ENCODE measurements at regions of chr22 and their contacts with region 1.

Region 1: GRCh38 chr22:40346178-40347118 is at the start of gene ADSL:
- DNase-seq: peak; percentile 41
- ATAC-seq: peak; percentile 95
- H3K4me3 ChIP-seq: peak within 1 kb of the TSS; percentile 81
- H3K27ac ChIP-seq: peak within 1 kb of the TSS; percentile 92
- H3K4me1 ChIP-seq: 0 out of 2 replicates have a peak, but pooled peaks cover 3% of the 10 kb centered on the region
- H3K27me3 ChIP-seq: no peaks in the 10 kb centered on the region
- CTCF ChIP-seq: no peak
- EP300 ChIP-seq: no peak
- POLR2A ChIP-seq: peak; percentile 99
- RAD21 ChIP-seq: no peak
- polyA plus RNA-seq, gene ADSL: 230 to 313 TPM

Region 2: DNA sequence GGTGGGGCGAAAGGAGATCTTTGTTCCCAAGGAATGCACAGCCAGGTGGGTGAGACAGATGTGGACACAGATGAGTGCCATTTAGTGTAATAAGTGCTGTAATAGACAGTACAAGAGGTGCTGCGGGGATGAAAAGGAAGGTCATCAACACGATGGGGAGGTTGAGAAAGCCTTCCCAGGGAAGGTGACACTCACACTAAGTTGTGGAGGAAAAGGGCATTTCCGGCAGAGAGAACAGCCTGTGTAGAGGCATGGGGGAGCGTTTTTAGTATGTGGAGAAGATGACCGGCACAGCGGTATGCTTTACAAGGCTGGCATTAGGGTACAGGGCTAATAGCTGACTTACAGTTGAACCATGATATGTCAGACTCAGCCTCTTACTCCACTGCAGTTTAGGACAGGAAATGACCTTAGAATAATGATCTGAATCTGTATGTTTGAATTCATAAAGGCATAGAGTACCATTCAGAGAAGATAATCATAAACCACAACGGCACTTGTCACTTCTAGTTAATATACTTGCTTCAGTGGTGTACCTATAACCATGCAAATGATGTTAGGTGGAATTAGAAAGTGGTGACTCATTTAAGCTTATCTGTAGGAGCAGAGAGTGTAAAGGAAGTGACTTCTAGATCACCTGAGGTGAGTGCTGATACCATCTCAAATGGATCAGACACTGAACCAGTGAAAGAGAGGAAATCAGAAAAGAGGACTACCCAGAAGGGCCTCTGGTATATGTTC is 291.1 kb before region 1 on chr22:
- CTCF ChIA-PET with region 1: interaction called, 18 read pairs
- POLR2A ChIA-PET with region 1: no interaction called
- RAD21 ChIA-PET with region 1: interaction called, 3 read pairs
- SMC1A ChIA-PET with region 1: interaction called, 3 read pairs
- in situ Hi-C with region 1: no loop called
- intact Hi-C with region 1: no loop called
- DNase-seq: peak; percentile 40
- ATAC-seq: peak; percentile 92
- H3K4me3 ChIP-seq: 0 out of 2 replicates have a peak overlapping the region, but pooled peaks have one; percentile 10
- H3K27ac ChIP-seq: no peak overlapping the region; the same call in 1 of the 2 replicates
- H3K4me1 ChIP-seq: peaks cover 30% of the 10 kb centered on the region
- H3K27me3 ChIP-seq: no peaks in the 10 kb centered on the region
- CTCF ChIP-seq: no peak
- EP300 ChIP-seq: no peak
- POLR2A ChIP-seq: no peak
- RAD21 ChIP-seq: no peak

Region 3: GRCh38 chr22:40270748-40271373 is 75.6 kb before region 1 on chr22:
- CTCF ChIA-PET with region 1: interaction called, 6 read pairs
- POLR2A ChIA-PET with region 1: interaction called, 3 read pairs
- RAD21 ChIA-PET with region 1: interaction called, 16 read pairs
- SMC1A ChIA-PET with region 1: interaction called, 19 read pairs
- in situ Hi-C with region 1: no loop called
- intact Hi-C with region 1: no loop called
- DNase-seq: no peak
- ATAC-seq: no peak
- H3K4me3 ChIP-seq: no peak overlapping the region
- H3K27ac ChIP-seq: no peak overlapping the region
- H3K4me1 ChIP-seq: no peaks in the 10 kb centered on the region
- H3K27me3 ChIP-seq: no peaks in the 10 kb centered on the region
- CTCF ChIP-seq: no peak
- EP300 ChIP-seq: no peak
- POLR2A ChIP-seq: no peak
- RAD21 ChIP-seq: no peak

Region 4: GRCh38 chr22:40334899-40335298 is 11.5 kb before region 1 on chr22:
- CTCF ChIA-PET with region 1: interaction called, 40 read pairs
- POLR2A ChIA-PET with region 1: interaction called, 6 read pairs
- RAD21 ChIA-PET with region 1: interaction called, 7 read pairs
- SMC1A ChIA-PET with region 1: interaction called, 40 read pairs
- in situ Hi-C with region 1: no loop called
- intact Hi-C with region 1: no loop called
- DNase-seq: no peak
- ATAC-seq: no peak
- H3K4me3 ChIP-seq: no peak overlapping the region
- H3K27ac ChIP-seq: no peak overlapping the region
- H3K4me1 ChIP-seq: peaks cover 36% of the 10 kb centered on the region
- H3K27me3 ChIP-seq: no peaks in the 10 kb centered on the region
- CTCF ChIP-seq: no peak
- EP300 ChIP-seq: no peak
- POLR2A ChIP-seq: no peak
- RAD21 ChIP-seq: no peak

Region 5: GRCh38 chr22:40391417-40391816 is 45.0 kb after region 1 on chr22:
- CTCF ChIA-PET with region 1: no interaction called
- POLR2A ChIA-PET with region 1: no interaction called
- RAD21 ChIA-PET with region 1: no interaction called
- SMC1A ChIA-PET with region 1: no interaction called
- in situ Hi-C with region 1: no loop called
- intact Hi-C with region 1: no loop called
- DNase-seq: no peak
- ATAC-seq: no peak
- H3K4me3 ChIP-seq: no peak overlapping the region
- H3K27ac ChIP-seq: no peak overlapping the region
- H3K4me1 ChIP-seq: peaks cover 11% of the 10 kb centered on the region
- H3K27me3 ChIP-seq: no peaks in the 10 kb centered on the region
- CTCF ChIP-seq: no peak
- EP300 ChIP-seq: no peak
- POLR2A ChIP-seq: no peak
- RAD21 ChIP-seq: no peak

Region 6: DNA sequence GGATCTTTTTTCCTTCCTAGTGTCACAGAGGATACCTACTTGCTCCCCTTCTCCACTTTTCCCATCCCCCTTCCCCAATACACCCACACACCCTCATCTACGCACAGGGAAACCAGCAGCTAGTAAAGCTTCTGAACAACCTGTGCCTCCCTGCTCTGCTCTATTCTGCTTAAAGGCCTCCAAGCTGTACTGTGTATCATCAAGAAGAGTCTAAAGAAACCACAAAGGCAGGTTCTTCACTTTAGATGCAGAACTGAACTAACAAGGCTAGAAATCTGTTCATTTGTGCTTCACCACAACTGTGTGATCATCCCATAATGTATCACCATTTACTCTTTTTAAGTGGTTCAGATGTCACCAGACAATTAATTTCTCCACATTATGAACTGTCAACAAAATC is 156.5 kb after region 1 on chr22:
- CTCF ChIA-PET with region 1: no interaction called
- POLR2A ChIA-PET with region 1: no interaction called
- RAD21 ChIA-PET with region 1: no interaction called
- SMC1A ChIA-PET with region 1: no interaction called
- in situ Hi-C with region 1: no loop called
- intact Hi-C with region 1: no loop called
- DNase-seq: no peak
- ATAC-seq: 0 out of 3 replicates have a peak, but pooled peaks have one; percentile 9
- H3K4me3 ChIP-seq: no peak overlapping the region
- H3K27ac ChIP-seq: no peak overlapping the region
- H3K4me1 ChIP-seq: peaks cover 35% of the 10 kb centered on the region
- H3K27me3 ChIP-seq: no peaks in the 10 kb centered on the region
- CTCF ChIP-seq: no peak
- EP300 ChIP-seq: no peak
- POLR2A ChIP-seq: no peak
- RAD21 ChIP-seq: no peak

Region 7: DNA sequence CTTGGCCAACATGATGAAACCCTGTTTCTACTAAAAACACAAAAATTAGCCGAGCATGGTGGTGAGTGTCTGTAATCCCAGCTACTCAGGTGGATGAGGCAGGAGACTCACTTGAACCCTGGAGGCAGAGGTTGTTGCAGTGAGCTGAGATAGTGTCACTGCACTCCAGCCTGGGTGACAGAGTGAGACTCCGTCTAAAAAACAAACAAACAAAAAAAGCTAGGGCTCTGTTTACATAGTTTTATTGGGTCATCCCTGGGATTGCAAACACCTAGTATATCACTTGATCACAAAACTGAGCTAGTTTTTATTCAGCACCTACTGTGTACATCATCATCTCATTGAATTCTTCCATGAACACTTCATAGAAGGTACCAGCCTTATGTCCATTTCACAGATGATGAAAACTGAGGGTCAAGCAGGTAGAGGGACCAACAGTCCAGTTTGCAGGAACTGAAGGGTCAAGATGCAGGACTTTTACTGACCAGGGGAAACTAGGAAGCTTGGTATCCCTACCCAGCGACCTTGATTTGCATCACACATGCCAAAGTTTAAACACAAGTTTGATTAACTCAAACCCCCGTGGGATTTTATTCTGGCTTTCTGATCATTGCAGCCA is 299.2 kb after region 1 on chr22:
- CTCF ChIA-PET with region 1: interaction called, 29 read pairs
- POLR2A ChIA-PET with region 1: no interaction called
- RAD21 ChIA-PET with region 1: interaction called, 4 read pairs
- SMC1A ChIA-PET with region 1: interaction called, 19 read pairs
- in situ Hi-C with region 1: no loop called
- intact Hi-C with region 1: no loop called
- DNase-seq: no peak
- ATAC-seq: no peak
- H3K4me3 ChIP-seq: no peak overlapping the region
- H3K27ac ChIP-seq: no peak overlapping the region
- H3K4me1 ChIP-seq: peaks cover 18% of the 10 kb centered on the region
- H3K27me3 ChIP-seq: no peaks in the 10 kb centered on the region
- CTCF ChIP-seq: no peak
- EP300 ChIP-seq: no peak
- POLR2A ChIP-seq: no peak
- RAD21 ChIP-seq: no peak

Region 8: DNA sequence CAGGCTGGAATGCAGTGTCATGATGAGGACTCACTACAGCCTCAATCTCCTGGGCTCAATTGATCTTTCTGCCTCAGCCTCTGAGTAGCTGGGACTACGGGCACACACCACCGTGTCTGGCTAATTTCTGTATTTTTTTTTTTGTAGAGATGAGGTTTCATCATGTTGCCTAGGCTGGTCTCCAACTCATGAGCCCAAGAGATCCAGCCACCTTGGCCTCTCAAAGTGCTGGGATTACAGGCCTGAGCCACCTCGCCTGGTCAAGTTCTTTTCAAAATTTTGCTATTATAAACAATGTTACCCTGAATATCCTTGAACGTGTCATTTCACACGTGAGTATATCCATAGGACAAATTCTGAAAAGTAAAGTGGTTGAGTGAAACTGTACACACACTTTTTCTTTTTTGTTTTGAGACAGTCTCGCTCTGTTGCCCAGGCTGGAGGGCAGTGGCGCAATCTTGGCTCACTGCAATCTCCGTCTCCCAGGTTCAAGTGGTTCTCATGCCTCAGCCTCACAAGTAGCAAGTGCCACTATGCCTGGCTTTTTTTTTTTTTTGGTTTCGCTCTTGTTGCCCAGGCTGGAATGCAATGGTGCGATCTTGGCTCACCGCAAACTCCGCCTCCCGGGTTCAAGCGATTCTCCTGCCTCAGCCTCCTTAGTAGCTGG is 724.4 kb after region 1 on chr22:
- CTCF ChIA-PET with region 1: no interaction called
- POLR2A ChIA-PET with region 1: no interaction called
- RAD21 ChIA-PET with region 1: no interaction called
- SMC1A ChIA-PET with region 1: no interaction called
- in situ Hi-C with region 1: no loop called
- intact Hi-C with region 1: no loop called
- DNase-seq: no peak
- ATAC-seq: no peak
- H3K4me3 ChIP-seq: no peak overlapping the region
- H3K27ac ChIP-seq: no peak overlapping the region
- H3K4me1 ChIP-seq: peaks cover 16% of the 10 kb centered on the region
- H3K27me3 ChIP-seq: no peaks in the 10 kb centered on the region
- CTCF ChIP-seq: no peak
- EP300 ChIP-seq: no peak
- POLR2A ChIP-seq: no peak
- RAD21 ChIP-seq: no peak

Measured in GM12878 (cell line).